PC-3 (cell line): ENCODE measurements at regions of chr1 and their contacts with region 1.

Region 1: DNA sequence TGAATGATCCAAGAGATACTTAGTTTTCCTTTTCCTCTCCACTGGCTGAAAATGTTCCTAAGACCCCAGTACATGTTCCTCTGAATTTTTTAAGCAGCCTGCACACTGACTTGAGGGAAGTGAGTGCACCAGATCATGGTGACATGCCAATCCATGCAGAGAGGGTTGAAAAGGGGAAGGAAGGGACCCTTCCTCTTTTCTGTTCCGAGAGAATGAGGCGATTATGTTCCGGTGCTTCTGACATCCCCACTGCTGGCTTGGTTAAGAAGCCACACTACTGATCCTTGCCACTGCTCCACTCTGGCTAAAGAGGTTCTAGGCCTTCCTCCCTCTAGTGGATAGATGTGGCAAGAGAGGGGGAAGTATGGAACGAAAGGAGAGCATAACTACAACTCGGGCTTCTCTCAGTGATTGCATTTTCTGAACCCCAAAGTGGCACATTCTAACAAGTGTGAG is 1.8 kb upstream of the CYB5R1 start:
- DNase-seq: peak; percentile 76
- ATAC-seq: peak; percentile 75
- H3K4me3 ChIP-seq: no peak overlapping the region
- H3K27ac ChIP-seq: no peak overlapping the region
- H3K4me1 ChIP-seq: peaks cover 19% of the 10 kb centered on the region
- H3K27me3 ChIP-seq: peaks cover 20% of the 10 kb centered on the region
- CTCF ChIP-seq: peak; percentile 87

Region 2: GRCh38 chr1:202810615-202811295 is 158.1 kb before region 1 on chr1 and contains the start of gene PCAT6:
- CTCF ChIA-PET with region 1: no interaction called
- POLR2A ChIA-PET with region 1: no interaction called
- intact Hi-C with region 1: loop called (anchors 2 kb)
- DNase-seq: peak; percentile 95
- ATAC-seq: peak; percentile 82
- H3K4me3 ChIP-seq: peak within 1 kb of the TSS; percentile 81
- H3K27ac ChIP-seq: no peak within 1 kb of the TSS
- H3K4me1 ChIP-seq: peaks cover 37% of the 10 kb centered on the region
- H3K27me3 ChIP-seq: no peaks in the 10 kb centered on the region
- CTCF ChIP-seq: no peak
- total RNA-seq, gene PCAT6: 0.26 and 1.7 TPM in 2 replicates

Region 3: DNA sequence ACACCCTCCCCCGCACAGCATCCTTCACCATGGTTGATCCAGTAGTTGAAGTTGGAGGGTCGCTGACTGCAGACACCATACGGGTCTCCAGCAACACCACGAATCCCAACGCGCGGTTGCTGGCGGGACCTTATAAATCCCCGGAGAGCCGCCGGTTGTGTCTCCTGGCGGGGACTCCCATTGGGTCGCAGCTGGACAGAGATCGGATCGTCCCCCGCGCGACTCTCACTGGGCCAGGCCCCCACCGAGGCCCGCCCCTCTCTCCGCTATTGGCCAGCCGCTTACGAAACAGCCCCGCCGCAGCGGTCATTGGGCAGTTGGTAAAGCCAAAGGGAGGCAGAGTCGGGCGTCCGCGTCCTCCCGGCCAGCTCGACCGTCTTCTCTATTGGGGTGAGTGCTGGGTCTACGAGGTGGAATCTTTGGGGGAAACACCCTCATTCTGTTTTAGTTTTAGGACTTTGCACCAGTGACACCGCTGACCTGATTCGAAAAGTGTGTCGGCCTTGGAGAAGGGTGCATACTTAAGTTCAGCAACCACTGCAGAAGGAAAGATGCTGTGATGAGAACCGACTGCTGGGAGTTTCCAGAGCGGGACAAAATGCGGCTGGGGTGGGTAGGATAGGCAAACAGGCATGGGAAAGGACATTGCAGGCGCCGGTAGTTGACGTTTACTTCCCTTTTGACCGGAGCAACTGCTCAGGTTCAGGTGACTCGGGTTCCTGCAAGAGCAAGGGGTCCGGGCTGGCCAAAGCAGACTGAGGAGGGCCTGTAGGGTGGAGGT is 107.3 kb before region 1 on chr1:
- CTCF ChIA-PET with region 1: no interaction called
- POLR2A ChIA-PET with region 1: no interaction called
- intact Hi-C with region 1: loop called (anchors 1 kb)
- DNase-seq: peak; percentile 97
- ATAC-seq: peak; percentile 96
- H3K4me3 ChIP-seq: peak overlapping the region; percentile 88
- H3K27ac ChIP-seq: no peak overlapping the region
- H3K4me1 ChIP-seq: peaks cover 14% of the 10 kb centered on the region; the same call in 1 of the 2 replicates
- H3K27me3 ChIP-seq: no peaks in the 10 kb centered on the region
- CTCF ChIP-seq: no peak

Region 4: DNA sequence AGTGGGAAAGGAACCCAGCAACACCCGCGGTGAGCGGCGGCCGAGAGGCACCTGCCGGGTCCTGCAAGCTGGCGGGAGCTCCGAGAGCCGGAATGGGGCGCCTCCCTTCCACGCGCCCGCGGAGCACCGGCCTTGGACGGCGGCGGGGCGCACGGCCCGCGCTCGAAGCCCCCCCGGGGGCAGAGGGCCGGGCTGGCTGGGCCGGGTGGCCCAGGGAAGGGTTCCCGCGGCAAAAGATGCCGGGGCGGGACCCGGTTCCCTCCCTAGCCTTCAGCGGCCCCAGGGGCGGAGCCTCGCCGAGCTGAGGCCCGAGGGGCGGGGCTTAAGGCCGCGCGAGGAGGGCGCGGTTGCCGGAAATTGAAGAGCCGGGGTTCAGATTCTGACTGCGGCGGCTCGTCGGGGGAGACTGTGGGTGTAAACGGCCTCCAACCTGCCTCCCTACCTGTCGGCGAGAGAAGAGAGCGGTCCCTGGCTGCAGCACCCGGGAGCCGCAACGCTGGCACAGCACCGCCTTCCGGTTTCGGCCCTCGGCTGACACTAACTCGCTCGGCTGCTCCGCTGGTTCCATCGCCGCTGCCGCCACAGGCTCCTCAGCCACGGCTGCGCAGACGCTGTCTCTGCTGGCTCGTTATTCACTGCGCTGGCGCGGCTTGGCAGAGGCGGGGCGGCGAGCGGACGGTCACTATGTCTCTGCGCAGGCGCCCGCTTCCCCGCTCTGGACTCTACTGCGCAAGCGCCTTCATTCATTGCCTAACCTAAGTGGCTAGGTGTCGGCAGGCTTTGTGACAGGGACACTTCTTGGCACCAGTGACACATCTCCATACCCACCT is 80.1 kb before region 1 on chr1 and contains the start of gene RABIF:
- CTCF ChIA-PET with region 1: no interaction called
- POLR2A ChIA-PET with region 1: no interaction called
- intact Hi-C with region 1: loop called (anchors 1 kb)
- DNase-seq: peak; percentile 98
- ATAC-seq: peak; percentile 94
- H3K4me3 ChIP-seq: peak within 1 kb of the TSS; percentile 92
- H3K27ac ChIP-seq: peak within 1 kb of the TSS; percentile 78
- H3K4me1 ChIP-seq: peaks cover 13% of the 10 kb centered on the region
- H3K27me3 ChIP-seq: no peaks in the 10 kb centered on the region
- CTCF ChIP-seq: no peak; the same call in 1 of the 2 replicates
- total RNA-seq, gene RABIF: 14.8 and 15.5 TPM in 2 replicates

Region 5: GRCh38 chr1:202926720-202927491 is 42.0 kb before region 1 on chr1 and contains the start of gene KLHL12:
- CTCF ChIA-PET with region 1: no interaction called
- POLR2A ChIA-PET with region 1: no interaction called
- intact Hi-C with region 1: loop called (anchors 1 kb)
- DNase-seq: peak; percentile 98
- ATAC-seq: peak; percentile 97
- H3K4me3 ChIP-seq: peak within 1 kb of the TSS; percentile 82
- H3K27ac ChIP-seq: peak within 1 kb of the TSS; percentile 81
- H3K4me1 ChIP-seq: peaks cover 24% of the 10 kb centered on the region
- H3K27me3 ChIP-seq: no peaks in the 10 kb centered on the region
- CTCF ChIP-seq: peak; percentile 82
- total RNA-seq, gene KLHL12: 25.2 and 26.7 TPM in 2 replicates

Region 6: DNA sequence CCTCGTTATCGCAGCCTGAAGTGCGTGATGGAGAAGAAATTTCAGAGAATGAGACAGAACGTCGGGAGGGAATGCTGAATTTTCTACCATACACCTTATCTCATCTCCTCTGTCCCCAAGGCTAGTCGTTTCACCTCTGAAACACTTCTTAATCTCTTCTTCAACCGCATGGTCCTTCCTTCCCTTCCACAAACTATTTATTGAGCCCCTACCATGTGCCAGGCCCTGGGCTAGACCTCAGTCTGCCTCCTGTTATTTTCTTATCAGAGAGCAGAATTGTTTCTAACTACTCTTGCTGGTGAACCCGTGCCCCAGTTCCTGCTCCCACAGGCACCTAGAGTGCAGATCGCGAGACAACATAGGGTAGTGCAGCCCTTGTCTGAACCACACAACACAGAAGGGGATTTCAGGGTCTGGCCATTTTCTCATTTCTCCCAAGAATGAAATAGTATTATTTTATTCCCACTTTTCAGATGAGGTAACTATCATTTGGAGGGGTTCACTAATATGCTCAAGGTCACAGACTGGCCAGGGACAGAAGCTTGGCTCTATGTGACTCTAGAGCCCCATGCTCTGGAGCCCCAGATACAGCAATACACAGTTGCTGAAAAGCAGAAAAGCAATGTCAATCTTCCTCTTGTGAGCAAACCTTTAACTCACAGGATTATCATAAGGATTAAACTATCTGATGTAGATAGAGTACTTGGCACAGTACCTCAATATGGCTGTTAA is 10.2 kb before region 1 on chr1:
- CTCF ChIA-PET with region 1: no interaction called
- POLR2A ChIA-PET with region 1: no interaction called
- intact Hi-C with region 1: loop called (anchors 1 kb)
- DNase-seq: no peak
- ATAC-seq: no peak
- H3K4me3 ChIP-seq: peak overlapping the region; percentile 96
- H3K27ac ChIP-seq: peak overlapping the region; percentile 21
- H3K4me1 ChIP-seq: peaks cover 44% of the 10 kb centered on the region
- H3K27me3 ChIP-seq: no peaks in the 10 kb centered on the region
- CTCF ChIP-seq: no peak

Region 7: GRCh38 chr1:202998836-202999750 is 30.2 kb after region 1 on chr1:
- CTCF ChIA-PET with region 1: no interaction called
- POLR2A ChIA-PET with region 1: interaction called, 5 read pairs
- intact Hi-C with region 1: loop called (anchors 2 kb)
- DNase-seq: peak; percentile 88
- ATAC-seq: peak; percentile 69
- H3K4me3 ChIP-seq: peak overlapping the region; percentile 66
- H3K27ac ChIP-seq: no peak overlapping the region
- H3K4me1 ChIP-seq: peaks cover 7% of the 10 kb centered on the region; the same call in 1 of the 2 replicates
- H3K27me3 ChIP-seq: peaks cover 27% of the 10 kb centered on the region
- CTCF ChIP-seq: peak; percentile 97